H1 (cell line): ENCODE measurements at regions of chr15 and their contacts with region 1.

Region 1: DNA sequence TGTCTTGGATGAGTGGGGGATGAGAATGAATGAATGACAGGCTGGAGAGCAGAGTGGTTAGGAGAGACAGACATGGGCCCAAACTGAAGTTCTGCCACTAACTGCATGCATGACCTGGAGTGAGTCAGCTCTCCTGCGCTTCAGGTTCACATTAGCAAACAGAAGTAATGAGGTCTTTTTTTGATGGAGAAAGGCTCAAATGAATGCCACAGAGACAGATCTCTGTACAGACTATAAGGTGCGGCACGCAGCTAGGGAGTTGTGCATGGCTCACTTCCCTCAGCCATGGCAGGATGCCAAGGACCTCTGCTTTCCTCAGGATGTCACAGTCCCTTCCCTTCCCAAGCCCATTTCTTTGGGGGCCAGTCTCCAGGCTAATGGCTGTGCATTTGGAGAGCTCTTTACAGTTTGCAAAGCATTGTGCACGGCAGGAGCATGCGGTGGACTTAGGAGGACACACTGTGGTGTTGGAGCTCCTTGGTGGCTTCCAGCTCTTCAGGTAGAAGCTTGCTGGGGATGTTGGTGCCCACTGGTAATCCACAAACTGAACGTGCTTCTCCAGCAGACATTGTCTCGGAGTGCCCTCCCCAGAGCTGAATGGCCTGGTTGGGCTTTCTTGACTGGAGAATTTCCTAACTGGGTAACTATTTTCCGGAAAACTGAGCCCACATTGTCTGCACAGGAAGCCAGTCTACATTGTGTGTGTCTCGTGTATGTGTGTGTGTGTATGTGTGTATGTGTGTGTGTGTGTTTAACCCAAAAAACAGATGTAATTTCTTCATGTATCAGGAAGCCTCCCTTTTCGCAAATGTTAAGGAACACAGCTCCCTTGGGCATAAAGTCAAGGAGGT is 172.4 kb upstream of the TLE3 start:
- DNase-seq: no peak
- H3K4me3 ChIP-seq: no peak overlapping the region
- H3K27ac ChIP-seq: no peak overlapping the region
- H3K4me1 ChIP-seq: peaks cover 0 to 11% (median 6%) of the 10 kb centered on the region in 4 experiments; a peak in 5 of 7 replicates
- H3K27me3 ChIP-seq: no peaks in the 10 kb centered on the region
- CTCF ChIP-seq: no peak
- EP300 ChIP-seq: no peak
- POLR2A ChIP-seq: no peak
- RAD21 ChIP-seq: no peak

Region 2: DNA sequence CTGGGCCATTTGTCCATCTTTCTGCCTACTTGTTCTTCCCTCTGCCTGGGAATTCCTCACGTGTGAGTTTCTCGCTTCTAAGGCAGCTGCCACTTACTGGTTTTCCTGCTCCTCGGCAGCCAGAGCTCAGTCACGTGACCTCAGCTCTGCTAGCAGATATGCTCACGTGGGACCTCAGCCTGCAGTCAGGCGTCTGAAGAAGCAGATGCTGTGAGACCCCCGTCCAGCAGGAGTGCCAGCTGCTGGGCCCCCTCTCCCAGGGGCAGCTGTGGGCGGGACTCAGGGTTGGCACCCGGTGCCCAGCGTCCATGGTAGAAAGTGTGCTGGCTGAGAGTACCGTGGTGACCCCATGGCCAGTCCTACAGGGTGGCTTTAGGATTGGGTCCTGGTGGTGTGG is 11.1 kb before region 1 on chr15:
- CTCF ChIA-PET with region 1: interaction called, 12 read pairs
- POLR2A ChIA-PET with region 1: no interaction called
- DNase-seq: no peak
- H3K4me3 ChIP-seq: no peak overlapping the region
- H3K27ac ChIP-seq: no peak overlapping the region
- H3K4me1 ChIP-seq: peaks cover 0 to 3% (median 1%) of the 10 kb centered on the region in 4 experiments; a peak in 4 of 7 replicates
- H3K27me3 ChIP-seq: no peaks in the 10 kb centered on the region
- CTCF ChIP-seq: no peak
- EP300 ChIP-seq: no peak
- POLR2A ChIP-seq: no peak
- RAD21 ChIP-seq: no peak

Region 3: GRCh38 chr15:70299931-70300869 is 30.1 kb after region 1 on chr15:
- CTCF ChIA-PET with region 1: no interaction called
- POLR2A ChIA-PET with region 1: no interaction called
- DNase-seq: no peak
- H3K4me3 ChIP-seq: no peak overlapping the region
- H3K27ac ChIP-seq: no peak overlapping the region
- H3K4me1 ChIP-seq: no peaks in the 10 kb centered on the region
- H3K27me3 ChIP-seq: no peaks in the 10 kb centered on the region; a peak in 1 of 7 replicates
- CTCF ChIP-seq: no peak
- EP300 ChIP-seq: no peak
- POLR2A ChIP-seq: no peak
- RAD21 ChIP-seq: no peak

Region 4: DNA sequence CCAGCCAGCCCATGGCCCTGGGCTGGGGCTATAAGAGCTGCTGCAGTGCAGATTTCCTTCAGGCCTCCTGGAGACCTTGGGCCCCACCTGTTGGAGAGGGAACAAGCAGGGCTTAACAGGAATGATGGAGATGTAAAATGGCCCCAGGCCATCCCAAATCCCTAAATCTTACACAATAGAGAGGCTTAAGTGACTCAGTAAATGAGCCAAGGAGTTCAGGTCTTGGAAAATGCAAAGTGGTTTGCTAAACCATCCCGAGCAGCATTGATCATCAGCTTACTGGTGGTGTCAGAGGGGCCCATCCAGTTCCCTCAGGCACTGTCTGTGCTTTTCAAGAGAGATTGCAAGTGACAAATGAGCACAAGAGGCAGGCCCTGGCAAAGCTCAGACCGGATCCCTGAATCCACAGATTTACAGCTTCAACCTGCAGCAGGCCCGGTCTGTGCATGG is 167.8 kb after region 1 on chr15:
- CTCF ChIA-PET with region 1: no interaction called
- POLR2A ChIA-PET with region 1: no interaction called
- DNase-seq: no peak
- H3K4me3 ChIP-seq: no peak overlapping the region
- H3K27ac ChIP-seq: no peak overlapping the region
- H3K4me1 ChIP-seq: peaks cover 0 to 8% (median 4%) of the 10 kb centered on the region in 4 experiments; a peak in 2 of 7 replicates
- H3K27me3 ChIP-seq: no peaks in the 10 kb centered on the region; a peak in 1 of 7 replicates
- CTCF ChIP-seq: peak; percentile 9 to 33 (median 32); a peak in 3 of 4 replicates
- EP300 ChIP-seq: no peak
- POLR2A ChIP-seq: no peak
- RAD21 ChIP-seq: peak; percentile 42 to 57